ENCODE measurements at regions of chr2 and their contacts with region 1.

Region 1: GRCh38 chr2:26088032-26088643 is 54.3 kb downstream of the RAB10 start:
- DNase-seq: no peak
- ATAC-seq: no peak

Region 2: DNA sequence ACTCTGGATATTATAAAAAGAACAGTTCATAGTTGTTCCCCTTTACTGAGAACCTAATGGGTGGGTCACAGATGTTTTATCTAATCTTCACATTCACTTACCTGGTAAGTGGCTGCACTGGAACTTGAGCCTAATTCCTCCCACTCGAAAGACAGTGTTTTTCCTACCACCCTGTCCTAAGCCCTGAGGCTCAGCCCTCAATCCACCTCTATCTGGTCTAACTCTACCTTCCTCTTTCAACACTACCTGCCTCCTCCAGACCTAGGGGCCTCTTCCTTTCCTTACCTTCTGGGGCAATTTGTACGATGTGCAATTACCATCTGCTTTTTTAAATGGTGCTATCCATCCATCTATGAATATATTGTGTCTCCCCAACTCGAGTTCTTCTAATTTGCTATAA is 96.2 kb before region 1 on chr2:
- intact Hi-C with region 1: loop called (anchors 10 kb)
- DNase-seq: no peak
- ATAC-seq: no peak

Region 3: GRCh38 chr2:26049641-26050040 is 38.5 kb before region 1 on chr2:
- intact Hi-C with region 1: loop called (anchors 1 kb)
- DNase-seq: no peak
- ATAC-seq: no peak

Region 4: GRCh38 chr2:26130763-26131162 is 42.6 kb after region 1 on chr2:
- intact Hi-C with region 1: loop called (anchors 5 kb)
- DNase-seq: no peak
- ATAC-seq: no peak

Region 5: DNA sequence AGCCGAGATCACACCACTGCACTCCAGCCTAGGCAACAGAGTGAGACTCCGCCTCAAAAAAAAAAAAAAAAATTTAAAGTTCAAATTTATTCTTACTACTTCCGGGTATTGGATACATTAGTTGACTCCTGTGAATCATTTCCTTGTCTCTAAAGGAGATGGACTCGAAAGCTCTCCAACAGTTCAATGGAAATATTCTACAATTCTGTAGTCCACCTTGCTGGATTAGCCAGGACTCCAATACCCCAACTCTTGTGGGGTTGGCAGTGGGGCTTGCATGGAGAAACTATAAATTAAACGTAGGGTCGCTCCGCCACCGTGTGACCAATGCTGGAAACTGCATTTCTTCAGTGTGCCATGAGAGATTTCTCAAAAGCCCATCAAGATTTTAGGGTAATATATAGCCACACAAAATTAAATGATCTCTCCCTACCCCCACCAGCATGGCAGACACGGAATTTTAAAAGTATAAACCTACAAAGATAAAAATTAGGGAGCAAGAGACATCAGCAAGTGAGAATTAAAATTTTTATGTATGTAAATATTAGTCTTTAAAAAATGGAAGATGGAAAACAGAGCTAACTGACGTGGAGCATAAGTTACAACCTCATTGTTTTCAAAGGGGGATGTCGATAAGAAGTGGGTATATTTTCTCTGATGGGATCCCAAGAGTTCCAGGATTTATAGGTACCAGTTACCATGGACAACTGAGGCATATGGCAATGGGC is 57.0 kb after region 1 on chr2:
- intact Hi-C with region 1: loop called (anchors 2 kb)
- DNase-seq: peak; percentile 71
- ATAC-seq: no peak